ENCODE measurements at regions of chr10 and their contacts with region 1.

Region 1: GRCh38 chr10:13984647-13985155 is 346.0 kb downstream of the FRMD4A start:
- DNase-seq: peak; percentile 25
- H3K4me3 Mint-ChIP-seq: no peak overlapping the region
- H3K27ac Mint-ChIP-seq: no peak overlapping the region
- H3K4me1 Mint-ChIP-seq: peaks cover 12% of the 10 kb centered on the region
- H3K27me3 Mint-ChIP-seq: no peaks in the 10 kb centered on the region

Region 2: DNA sequence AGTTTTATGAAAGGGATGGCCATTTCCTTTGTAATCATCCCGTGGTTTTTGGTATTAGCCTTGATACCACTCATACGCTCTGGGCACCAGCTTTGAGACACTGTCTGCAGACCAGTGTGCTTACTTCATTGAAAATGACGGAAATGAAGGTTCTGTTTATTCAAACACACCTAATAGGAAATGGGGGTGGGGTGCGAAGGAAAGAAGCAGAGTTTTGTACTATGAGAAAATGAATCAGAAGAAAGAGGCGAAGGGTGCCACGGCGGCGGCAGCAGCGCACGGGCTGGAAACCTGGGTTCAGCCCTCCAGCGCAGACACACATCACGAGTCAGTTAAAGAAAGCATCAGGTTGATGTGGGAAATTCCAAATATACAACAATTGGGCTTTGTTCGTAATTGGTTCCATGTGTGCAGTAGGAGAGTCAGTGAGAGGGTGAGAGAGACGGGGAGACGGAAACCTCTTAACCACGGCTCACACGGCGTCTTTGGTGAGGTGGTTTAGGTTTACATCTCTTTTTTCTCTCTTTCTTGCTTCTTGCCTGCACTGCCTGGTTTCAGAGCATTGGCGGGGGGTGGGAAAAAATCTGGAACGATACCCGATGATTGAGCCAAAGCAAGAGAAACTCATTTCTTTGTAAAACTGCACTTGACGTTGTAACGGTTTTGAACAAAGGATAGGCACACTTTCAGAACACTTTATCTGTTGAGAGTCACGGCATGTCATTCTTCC is 24.8 kb after region 1 on chr10:
- CTCF ChIA-PET with region 1: no interaction called
- POLR2A ChIA-PET with region 1: no interaction called
- intact Hi-C with region 1: loop called (anchors 1 kb)
- DNase-seq: peak; percentile 80
- H3K4me3 Mint-ChIP-seq: peak overlapping the region; percentile 81
- H3K27ac Mint-ChIP-seq: peak overlapping the region; percentile 79
- H3K4me1 Mint-ChIP-seq: peaks cover 27% of the 10 kb centered on the region
- H3K27me3 Mint-ChIP-seq: no peaks in the 10 kb centered on the region